HepG2 (cell line): ENCODE measurements at regions of chr6 and their contacts with region 1.

Region 1: DNA sequence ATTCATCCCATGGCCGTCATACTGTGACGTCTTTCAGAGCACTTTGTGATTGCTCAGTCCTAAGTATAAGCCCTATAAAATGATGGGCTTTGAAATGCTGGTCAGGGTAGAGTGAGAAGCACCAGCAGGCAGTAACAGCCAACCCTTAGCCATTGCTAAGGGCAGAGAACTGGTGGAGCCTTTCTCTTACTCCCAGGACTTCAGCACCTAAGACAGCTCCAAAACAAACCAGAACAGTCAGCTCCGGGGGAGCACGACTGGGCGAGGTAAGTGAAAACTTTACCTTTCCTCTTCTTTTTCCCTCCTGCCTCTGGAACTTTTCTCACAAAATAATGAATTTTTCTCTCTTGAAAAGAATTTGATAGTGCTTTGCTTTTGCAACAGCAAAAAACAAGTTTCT is at the start of gene VIP:
- DNase-seq: peak; percentile 35
- ATAC-seq: peak; percentile 89
- H3K4me3 ChIP-seq: no peak within 1 kb of the TSS
- H3K27ac ChIP-seq: no peak within 1 kb of the TSS
- H3K4me1 ChIP-seq: peaks cover 8% of the 10 kb centered on the region; the same call in 1 of the 2 replicates
- H3K27me3 ChIP-seq: no peaks in the 10 kb centered on the region
- CTCF ChIP-seq: no peak
- EP300 ChIP-seq: no peak
- POLR2A ChIP-seq: no peak
- RAD21 ChIP-seq: no peak
- total RNA-seq, gene VIP: not detected in 2 replicates

Region 2: DNA sequence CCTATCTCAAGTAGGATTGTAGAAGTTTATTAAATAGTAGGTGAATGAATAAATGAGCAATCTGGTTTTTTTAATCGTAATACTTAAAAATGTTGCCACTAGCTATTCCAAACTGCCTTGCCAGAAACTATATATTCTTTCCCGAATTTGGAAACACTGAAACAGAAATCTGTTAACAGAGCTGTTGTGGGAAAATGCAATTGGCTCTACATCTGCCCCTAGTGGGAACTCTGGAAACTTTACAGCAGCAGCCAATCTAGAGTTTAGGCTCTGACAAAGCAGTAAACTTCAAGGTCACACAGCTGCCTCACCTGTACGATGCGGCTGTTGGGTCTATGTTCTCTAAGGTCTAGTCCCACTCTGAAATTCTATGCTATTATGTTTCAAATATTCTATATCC is 155.2 kb before region 1 on chr6:
- CTCF ChIA-PET with region 1: no interaction called
- POLR2A ChIA-PET with region 1: no interaction called
- in situ Hi-C with region 1: no loop called
- intact Hi-C with region 1: no loop called
- DNase-seq: peak; percentile 16
- ATAC-seq: peak; percentile 94
- H3K4me3 ChIP-seq: no peak overlapping the region
- H3K27ac ChIP-seq: no peak overlapping the region
- H3K4me1 ChIP-seq: no peaks in the 10 kb centered on the region
- H3K27me3 ChIP-seq: no peaks in the 10 kb centered on the region
- CTCF ChIP-seq: 0 out of 2 replicates have a peak, but pooled peaks have one; percentile 13
- EP300 ChIP-seq: no peak
- POLR2A ChIP-seq: no peak
- RAD21 ChIP-seq: no peak

Region 3: DNA sequence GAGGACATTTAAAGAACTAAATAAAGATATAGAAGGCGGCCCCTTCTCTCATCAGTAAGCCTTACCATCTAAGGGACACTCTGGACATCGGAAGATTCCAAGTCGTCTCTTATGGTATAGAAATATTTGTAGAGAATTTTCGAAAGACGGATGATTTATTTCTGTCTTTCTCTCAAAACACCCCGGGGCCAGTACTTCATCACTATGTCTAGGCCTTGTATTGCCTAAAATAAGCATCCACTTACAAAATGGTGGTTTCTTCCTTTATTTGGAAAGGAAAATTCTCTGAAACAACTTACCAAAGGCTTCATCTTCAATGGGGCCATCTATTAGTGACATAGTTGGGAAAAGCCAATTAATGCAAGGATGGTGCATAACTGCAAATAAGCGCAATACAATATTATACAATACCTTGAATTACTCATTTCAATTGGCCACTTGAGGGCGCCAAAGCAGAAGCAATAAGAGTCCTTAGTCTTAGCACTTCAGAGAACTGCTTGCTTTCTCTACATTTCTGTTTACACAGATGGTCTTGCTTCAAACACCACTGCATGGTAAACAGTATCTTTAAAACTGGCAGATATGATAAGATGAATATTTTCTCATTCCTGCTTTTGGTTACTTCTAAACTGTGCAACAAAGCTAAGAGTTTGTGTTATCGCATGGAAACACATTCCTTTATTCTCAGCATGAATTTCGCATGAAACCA is 113.1 kb after region 1 on chr6:
- CTCF ChIA-PET with region 1: no interaction called
- POLR2A ChIA-PET with region 1: no interaction called
- in situ Hi-C with region 1: no loop called
- intact Hi-C with region 1: loop called (anchors 10 kb)
- DNase-seq: peak; percentile 74
- ATAC-seq: peak; percentile 98
- H3K4me3 ChIP-seq: no peak overlapping the region
- H3K27ac ChIP-seq: no peak overlapping the region
- H3K4me1 ChIP-seq: no peaks in the 10 kb centered on the region
- H3K27me3 ChIP-seq: no peaks in the 10 kb centered on the region
- CTCF ChIP-seq: peak; percentile 88
- EP300 ChIP-seq: no peak
- POLR2A ChIP-seq: no peak
- RAD21 ChIP-seq: peak; percentile 65